ENCODE measurements at regions of chr3 and their contacts with region 1.

Region 1: GRCh38 chr3:134485718-134486576 is at the starts of genes ANAPC13 and CEP63:
- DNase-seq: peak; percentile 95
- H3K4me3 Mint-ChIP-seq: peak within 1 kb of the TSS; percentile 87
- H3K27ac Mint-ChIP-seq: peak within 1 kb of the TSS; percentile 97
- H3K4me1 Mint-ChIP-seq: peaks cover 46% of the 10 kb centered on the region
- H3K27me3 Mint-ChIP-seq: no peaks in the 10 kb centered on the region
- total RNA-seq, gene ANAPC13: 30.1 to 33.1 TPM
- total RNA-seq, gene CEP63: 22.4 to 23.7 TPM

Region 2: DNA sequence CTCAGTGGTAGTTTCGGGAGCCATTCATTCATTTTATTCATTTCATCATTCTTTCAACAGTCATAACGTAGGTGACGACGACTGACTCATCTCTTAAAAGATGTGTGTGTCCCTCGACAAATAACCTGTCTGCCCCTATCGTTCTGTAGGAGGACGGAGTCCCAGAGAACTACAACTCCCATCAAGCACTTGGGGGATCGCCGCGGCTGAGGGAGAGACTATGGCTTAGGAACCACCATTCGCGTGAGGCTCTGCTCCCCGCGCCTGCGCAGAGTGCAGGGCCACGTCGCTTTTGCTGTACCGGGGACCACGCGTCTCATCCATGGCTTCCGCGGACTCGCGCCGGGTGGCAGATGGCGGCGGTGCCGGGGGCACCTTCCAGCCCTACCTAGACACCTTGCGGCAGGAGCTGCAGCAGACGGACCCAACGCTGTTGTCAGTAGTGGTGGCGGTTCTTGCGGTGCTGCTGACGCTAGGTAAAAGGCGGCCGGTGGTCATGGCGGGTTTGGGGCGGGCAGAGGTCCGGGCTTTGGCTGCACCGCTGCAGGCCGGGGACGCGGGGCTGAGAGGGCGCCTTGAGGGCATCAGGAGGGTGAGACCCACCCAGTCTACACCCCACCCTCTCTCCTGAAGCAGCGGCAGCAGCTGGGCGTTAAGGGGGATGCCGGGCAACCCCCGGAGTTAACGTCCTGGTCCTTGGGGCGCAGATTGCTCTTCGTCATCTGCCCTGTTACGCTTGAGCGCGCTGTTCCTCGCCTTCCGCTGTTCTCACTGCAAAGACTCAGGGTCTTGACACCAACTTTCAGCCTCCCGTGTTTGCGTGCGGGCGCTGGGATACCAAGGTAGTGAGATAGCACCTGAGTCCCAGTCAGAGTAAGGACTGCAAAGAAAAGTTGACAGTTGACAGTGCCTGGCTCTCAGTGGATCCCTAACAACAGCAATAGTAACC is 680.1 kb before region 1 on chr3 and contains the start of gene SRPRB:
- CTCF ChIA-PET with region 1: no interaction called
- POLR2A ChIA-PET with region 1: no interaction called
- intact Hi-C with region 1: loop called (anchors 1 kb)
- DNase-seq: peak; percentile 98
- H3K4me3 Mint-ChIP-seq: peak within 1 kb of the TSS; percentile 98
- H3K27ac Mint-ChIP-seq: peak within 1 kb of the TSS; percentile 94
- H3K4me1 Mint-ChIP-seq: peaks cover 37% of the 10 kb centered on the region
- H3K27me3 Mint-ChIP-seq: peaks cover 5% of the 10 kb centered on the region
- total RNA-seq, gene SRPRB: 65.7 to 66.7 TPM

Region 3: DNA sequence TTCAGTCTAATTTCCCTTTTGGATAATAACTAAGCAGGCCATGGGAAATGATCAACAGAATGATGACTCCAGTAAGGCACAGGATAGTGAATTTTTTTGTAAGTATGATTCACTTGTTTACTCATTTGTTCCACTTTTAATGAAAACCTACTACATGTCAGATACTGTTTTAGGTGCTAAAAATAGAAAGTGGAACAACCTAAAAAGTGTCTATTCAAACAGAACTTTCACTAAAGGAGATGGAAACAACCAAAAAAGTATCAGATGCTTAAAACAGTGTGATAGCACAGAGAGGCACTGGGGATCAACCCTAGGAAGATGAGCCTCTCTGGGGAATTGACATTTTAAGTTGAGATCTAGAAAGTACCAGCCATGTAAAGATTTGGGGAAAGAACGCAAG is 246.4 kb before region 1 on chr3:
- CTCF ChIA-PET with region 1: interaction called, 3 read pairs
- POLR2A ChIA-PET with region 1: interaction called, 5 read pairs
- intact Hi-C with region 1: loop called (anchors 1 kb)
- DNase-seq: no peak
- H3K4me3 Mint-ChIP-seq: peak overlapping the region; percentile 1
- H3K27ac Mint-ChIP-seq: peak overlapping the region; percentile 58
- H3K4me1 Mint-ChIP-seq: peaks cover 79% of the 10 kb centered on the region
- H3K27me3 Mint-ChIP-seq: no peaks in the 10 kb centered on the region

Region 4: GRCh38 chr3:134299185-134299887 is 186.6 kb before region 1 on chr3:
- CTCF ChIA-PET with region 1: interaction called, 176 read pairs
- POLR2A ChIA-PET with region 1: interaction called, 5 read pairs
- intact Hi-C with region 1: loop called (anchors 1 kb)
- DNase-seq: no peak
- H3K4me3 Mint-ChIP-seq: no peak overlapping the region
- H3K27ac Mint-ChIP-seq: no peak overlapping the region
- H3K4me1 Mint-ChIP-seq: no peaks in the 10 kb centered on the region
- H3K27me3 Mint-ChIP-seq: peaks cover 21% of the 10 kb centered on the region

Region 5: DNA sequence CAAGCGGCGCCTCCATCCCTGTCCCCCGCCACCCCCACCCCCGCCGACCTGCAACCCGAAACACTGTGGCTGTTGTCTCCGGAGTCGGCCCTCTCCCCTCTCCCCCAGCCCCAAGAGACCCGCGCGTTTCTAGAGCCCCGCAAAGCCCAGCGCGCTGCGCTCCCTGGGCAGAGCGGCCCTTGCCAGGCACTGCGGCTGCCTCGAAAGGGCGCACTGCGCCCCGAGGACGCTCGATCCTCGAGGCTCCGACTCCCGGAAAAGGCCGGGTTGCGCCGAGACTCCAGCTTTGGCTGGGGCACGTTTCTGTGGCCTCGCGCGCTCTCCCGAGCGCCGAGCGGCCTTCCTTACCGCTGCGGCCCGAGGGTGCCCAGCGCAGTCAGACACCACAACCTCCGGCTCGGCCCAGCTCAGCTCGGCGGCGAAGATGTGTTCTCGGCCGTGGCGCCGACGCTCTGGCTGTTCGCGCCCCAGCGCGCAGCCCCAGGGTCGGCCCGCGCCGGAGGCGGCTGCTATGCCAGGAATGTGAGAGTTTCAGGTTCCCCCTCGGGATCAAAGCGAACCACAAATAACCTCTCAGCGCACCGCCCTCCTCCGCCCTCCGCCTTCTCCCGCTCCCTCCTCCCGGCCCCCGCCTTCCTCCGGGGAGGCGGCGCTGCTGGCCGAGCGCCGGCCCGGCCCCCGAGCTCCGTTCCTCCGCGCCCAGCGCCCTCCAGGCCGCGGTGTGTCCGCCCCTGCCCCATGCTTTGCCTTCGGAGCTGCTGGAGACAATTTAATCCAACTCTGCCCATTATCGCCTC is 111.8 kb before region 1 on chr3 and contains the start of gene AMOTL2:
- CTCF ChIA-PET with region 1: no interaction called
- POLR2A ChIA-PET with region 1: no interaction called
- intact Hi-C with region 1: loop called (anchors 5 kb)
- DNase-seq: peak; percentile 29
- H3K4me3 Mint-ChIP-seq: peak within 1 kb of the TSS; percentile 66
- H3K27ac Mint-ChIP-seq: no peak within 1 kb of the TSS
- H3K4me1 Mint-ChIP-seq: peaks cover 8% of the 10 kb centered on the region
- H3K27me3 Mint-ChIP-seq: peaks cover 32% of the 10 kb centered on the region
- total RNA-seq, gene AMOTL2: 0.12 to 0.39 TPM

Region 6: GRCh38 chr3:134496471-134497071 is 10.6 kb after region 1 on chr3:
- CTCF ChIA-PET with region 1: interaction called, 5 read pairs
- POLR2A ChIA-PET with region 1: no interaction called
- intact Hi-C with region 1: loop called (anchors 1 kb)
- DNase-seq: no peak
- H3K4me3 Mint-ChIP-seq: no peak overlapping the region
- H3K27ac Mint-ChIP-seq: no peak overlapping the region
- H3K4me1 Mint-ChIP-seq: peaks cover 43% of the 10 kb centered on the region
- H3K27me3 Mint-ChIP-seq: no peaks in the 10 kb centered on the region

Measured in activated CD4-positive, alpha-beta memory T cell treated with anti-CD3 and anti-CD28 coated beads for 36 hours (primary cell).